ENCODE measurements at regions of chr3 and their contacts with region 1.

Region 1: GRCh38 chr3:10467904-10468612 is 37.3 kb downstream of the ATP2B2 start:
- DNase-seq: peak; percentile 54 to 86
- ATAC-seq: peak; percentile 42 to 66 (median 62)
- H3K4me3 ChIP-seq: no peak overlapping the region
- H3K27ac ChIP-seq: peak overlapping the region; percentile 86
- H3K4me1 ChIP-seq: peaks cover 48% of the 10 kb centered on the region
- H3K27me3 ChIP-seq: no peaks in the 10 kb centered on the region
- CTCF ChIP-seq: no peak

Region 2: DNA sequence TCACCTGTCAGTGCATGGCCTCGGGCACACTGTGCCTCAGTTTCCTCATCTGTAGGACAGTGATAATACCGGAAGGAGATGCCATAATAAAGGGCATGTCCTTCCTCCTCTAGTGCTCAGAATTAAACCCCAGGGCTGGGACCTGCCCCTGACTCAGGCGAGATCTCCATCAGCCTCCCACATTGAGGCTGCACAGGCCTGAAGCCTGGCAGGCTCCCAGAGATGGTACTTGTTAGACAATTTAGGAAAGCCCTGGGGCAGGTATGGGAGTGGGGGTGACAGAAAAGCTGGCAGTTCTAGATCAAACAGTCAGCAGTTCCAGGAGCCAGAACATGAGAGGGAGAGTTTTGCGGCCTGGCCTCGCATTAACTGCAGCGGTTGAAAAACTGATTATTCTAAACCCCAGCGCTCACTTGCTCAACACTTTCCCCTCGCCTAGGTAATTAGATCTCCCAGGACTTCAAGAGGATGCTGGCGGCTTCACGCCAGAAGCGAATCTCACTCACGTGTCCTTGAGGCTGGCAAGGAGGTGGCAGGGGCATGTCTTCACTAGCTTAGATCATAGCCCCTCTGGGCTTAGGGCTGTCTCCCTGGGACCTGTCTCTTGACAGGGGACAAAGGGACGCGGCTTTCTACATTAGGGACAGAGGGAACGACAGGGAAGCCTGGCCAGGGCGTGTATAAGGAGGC is 35.8 kb before region 1 on chr3:
- intact Hi-C with region 1: loop called in 1 of 2 experiments (anchors 5 kb)
- DNase-seq: peak in 1 of 2 donors; percentile 88
- ATAC-seq: peak; percentile 60 to 88 (median 70)
- H3K4me3 ChIP-seq: no peak overlapping the region
- H3K27ac ChIP-seq: peak overlapping the region; percentile 94
- H3K4me1 ChIP-seq: peaks cover 58% of the 10 kb centered on the region
- H3K27me3 ChIP-seq: no peaks in the 10 kb centered on the region
- CTCF ChIP-seq: no peak

Region 3: GRCh38 chr3:10551821-10552630 is 84.0 kb after region 1 on chr3:
- intact Hi-C with region 1: loop called in 1 of 2 experiments (anchors 5 kb)
- DNase-seq: peak; percentile 60 to 73
- ATAC-seq: peak; percentile 44 to 68 (median 62)
- H3K4me3 ChIP-seq: no peak overlapping the region
- H3K27ac ChIP-seq: peak overlapping the region; percentile 82
- H3K4me1 ChIP-seq: peaks cover 55% of the 10 kb centered on the region
- H3K27me3 ChIP-seq: no peaks in the 10 kb centered on the region
- CTCF ChIP-seq: no peak

Measured in psoas muscle (tissue), 8 donors.